HEK293 (cell line): ENCODE measurements at regions of chr5 and their contacts with region 1.

Region 1: GRCh38 chr5:23208959-23209431 is 298.4 kb upstream of the PRDM9 start:
- H3K4me3 ChIP-seq: no peak overlapping the region
- H3K27ac ChIP-seq: no peak overlapping the region
- H3K4me1 ChIP-seq: no peaks in the 10 kb centered on the region
- CTCF ChIP-seq: peak; percentile 8; the same call in 1 of the 2 replicates

Region 2: DNA sequence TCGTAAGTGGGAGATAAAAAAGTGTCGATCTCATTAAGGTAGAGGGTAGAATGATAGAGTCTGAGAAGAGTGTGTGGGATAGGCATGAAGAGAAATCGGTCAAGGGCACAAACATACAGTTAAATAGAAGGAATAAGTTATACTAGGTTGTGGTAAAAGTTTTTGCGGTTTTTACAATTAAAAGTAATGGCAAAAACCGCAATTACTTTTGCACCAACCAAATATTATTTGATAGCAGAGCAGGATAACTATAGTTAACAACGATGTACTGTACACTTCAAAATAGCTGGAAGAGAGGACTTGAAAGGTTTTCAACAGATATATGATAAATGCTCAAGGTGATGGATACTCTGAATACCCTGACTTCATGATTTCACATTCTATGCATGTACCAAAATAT is 220.1 kb before region 1 on chr5:
- CTCF ChIA-PET with region 1: no interaction called
- POLR2A ChIA-PET with region 1: no interaction called
- H3K4me3 ChIP-seq: no peak overlapping the region
- H3K27ac ChIP-seq: no peak overlapping the region
- H3K4me1 ChIP-seq: no peaks in the 10 kb centered on the region
- CTCF ChIP-seq: no peak

Region 3: DNA sequence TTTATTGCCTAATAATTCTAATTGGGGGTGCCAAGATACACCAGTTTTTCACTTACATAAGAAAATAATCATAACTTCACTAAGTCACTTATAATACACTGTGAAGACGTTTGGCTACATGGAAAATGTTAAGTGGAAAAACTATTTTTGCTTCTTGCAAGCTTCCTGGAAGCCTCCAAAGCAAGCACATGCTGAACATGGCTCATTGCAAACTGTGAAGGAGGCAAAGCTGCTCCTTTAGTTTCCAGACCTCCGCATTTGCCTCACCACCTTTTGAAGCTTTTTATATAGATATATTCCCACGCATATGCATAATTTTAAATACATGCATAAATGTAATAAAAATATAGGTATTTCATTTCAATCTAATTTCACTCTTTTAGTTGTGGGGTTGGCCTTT is 12.8 kb after region 1 on chr5:
- CTCF ChIA-PET with region 1: interaction called, 10 read pairs
- POLR2A ChIA-PET with region 1: no interaction called
- H3K4me3 ChIP-seq: no peak overlapping the region
- H3K27ac ChIP-seq: no peak overlapping the region
- H3K4me1 ChIP-seq: no peaks in the 10 kb centered on the region
- CTCF ChIP-seq: no peak

Region 4: GRCh38 chr5:23234197-23234596 is 25.2 kb after region 1 on chr5:
- CTCF ChIA-PET with region 1: interaction called, 10 read pairs
- POLR2A ChIA-PET with region 1: no interaction called
- H3K4me3 ChIP-seq: no peak overlapping the region
- H3K27ac ChIP-seq: no peak overlapping the region
- H3K4me1 ChIP-seq: no peaks in the 10 kb centered on the region
- CTCF ChIP-seq: no peak